HEK293T (cell line): ENCODE measurements at regions of chr3 and their contacts with region 1.

Region 1: GRCh38 chr3:48388966-48389365 is 16.9 kb downstream of the FBXW12 start:
- DNase-seq: no peak

Region 2: DNA sequence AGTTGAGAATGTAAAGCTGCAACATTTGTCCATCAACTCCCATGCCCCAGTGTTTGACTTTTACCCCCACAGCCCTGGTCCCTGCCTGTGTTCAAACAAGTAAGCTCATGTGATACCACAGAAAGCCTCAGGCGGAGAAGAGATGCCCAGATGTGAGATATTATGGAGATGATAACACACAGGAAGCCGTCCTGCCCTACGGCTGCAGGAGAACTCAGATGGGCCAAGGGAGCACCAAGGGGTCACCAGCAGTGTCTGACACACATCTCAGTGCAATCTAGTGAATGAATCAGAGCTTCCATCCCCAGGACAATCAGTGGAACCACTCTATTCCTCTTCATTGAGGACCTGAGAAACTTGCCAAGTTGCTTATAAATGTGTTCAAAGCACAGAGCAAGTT is 41.5 kb before region 1 on chr3:
- CTCF ChIA-PET with region 1: no interaction called
- POLR2A ChIA-PET with region 1: no interaction called
- DNase-seq: no peak

Region 3: GRCh38 chr3:48465531-48466378 is 76.8 kb after region 1 on chr3:
- CTCF ChIA-PET with region 1: no interaction called
- POLR2A ChIA-PET with region 1: no interaction called
- DNase-seq: peak; percentile 36

Region 4: DNA sequence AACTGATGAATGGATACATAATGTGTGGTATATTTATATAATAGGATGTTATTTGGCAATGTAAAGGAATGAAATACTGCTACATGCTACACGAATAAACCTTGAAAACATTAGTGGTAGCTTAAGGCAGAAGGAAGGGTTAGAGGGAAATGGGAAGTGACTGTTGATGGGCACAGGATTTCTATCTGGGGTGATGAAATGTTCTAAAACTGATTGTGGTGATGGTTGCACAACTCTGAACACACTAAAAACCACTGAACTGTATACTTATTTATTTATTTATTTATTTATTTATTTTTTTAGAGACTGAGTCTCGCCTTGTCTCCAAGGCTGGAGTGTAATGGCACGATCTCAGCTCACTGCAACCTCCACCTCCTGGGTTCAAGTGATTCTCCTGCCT is 139.8 kb after region 1 on chr3:
- CTCF ChIA-PET with region 1: interaction called, 10 read pairs
- POLR2A ChIA-PET with region 1: no interaction called
- DNase-seq: no peak